CD14-positive monocyte (primary cell): ENCODE measurements at regions of chr5 and their contacts with region 1.

Region 1: DNA sequence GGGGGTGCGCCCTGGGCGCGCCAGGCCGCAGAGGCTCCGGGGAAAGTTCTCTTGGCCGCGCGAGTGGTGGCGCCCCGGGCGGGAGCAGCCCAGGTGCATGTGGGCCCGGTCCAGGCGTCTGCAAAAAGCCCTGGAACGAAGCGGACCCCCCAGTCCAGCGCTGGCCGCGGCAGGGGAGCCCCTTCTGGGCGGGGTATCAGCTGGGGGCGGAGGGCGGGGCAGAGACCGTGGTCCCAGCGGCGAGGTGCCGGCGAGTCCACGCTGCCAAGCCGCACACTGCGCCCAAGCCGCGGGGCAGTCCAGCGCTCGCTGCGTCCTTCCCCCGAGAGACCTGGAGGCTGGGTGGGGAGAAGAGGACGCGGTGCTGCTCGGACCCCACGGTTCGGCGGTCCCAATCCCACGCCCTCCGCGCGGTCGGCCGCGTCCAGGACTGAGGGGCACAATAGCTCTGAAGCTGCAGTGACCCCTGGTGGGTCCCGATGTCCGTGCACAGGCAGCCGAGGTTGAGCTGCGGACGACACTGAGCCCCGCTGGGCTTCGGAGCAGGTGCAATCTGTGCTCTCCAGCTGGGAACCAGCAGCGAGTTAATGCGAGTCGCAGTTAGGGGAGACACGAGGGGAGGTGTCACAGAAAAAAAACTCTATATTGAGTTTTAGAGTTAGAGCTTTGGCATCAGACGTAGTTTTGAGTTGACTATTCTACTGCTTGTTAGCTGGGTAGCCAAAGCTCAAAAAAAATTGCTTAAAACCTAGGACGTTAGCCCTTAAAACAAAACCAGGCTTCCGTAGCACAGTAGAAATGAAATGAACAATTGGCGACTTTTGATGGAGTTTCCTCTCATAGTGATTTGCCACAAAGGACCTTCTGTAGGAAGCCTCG is 1.1 kb upstream of the EPB41L4A start:
- DNase-seq: peak; percentile 6 to 17 (median 13)
- H3K4me3 ChIP-seq: peak overlapping the region; percentile 21 to 75 (median 39)
- H3K4me3 Mint-ChIP-seq: peak overlapping the region; percentile 70 to 79
- H3K27ac ChIP-seq: no peak overlapping the region
- H3K27ac Mint-ChIP-seq: no peak overlapping the region
- H3K4me1 ChIP-seq: peaks cover 20 to 26% of the 10 kb centered on the region in 2 donors
- H3K4me1 Mint-ChIP-seq: peaks cover 18% of the 10 kb centered on the region
- H3K27me3 ChIP-seq: peaks cover 55 to 76% of the 10 kb centered on the region in 2 donors
- H3K27me3 Mint-ChIP-seq: peaks cover 54 to 79% (median 59%) of the 10 kb centered on the region in 3 donors
- CTCF ChIP-seq: peak; percentile 48

Region 2: GRCh38 chr5:112174959-112175594 is 245.1 kb before region 1 on chr5:
- intact Hi-C with region 1: loop called (anchors 10 kb)
- DNase-seq: peak; percentile 19 to 59 (median 54)
- H3K4me3 ChIP-seq: no peak overlapping the region
- H3K4me3 Mint-ChIP-seq: no peak overlapping the region
- H3K27ac ChIP-seq: no peak overlapping the region
- H3K27ac Mint-ChIP-seq: no peak overlapping the region
- H3K4me1 ChIP-seq: no peaks in the 10 kb centered on the region
- H3K4me1 Mint-ChIP-seq: no peaks in the 10 kb centered on the region
- H3K27me3 ChIP-seq: peaks cover 5 to 7% of the 10 kb centered on the region in 2 donors
- H3K27me3 Mint-ChIP-seq: peaks cover 1 to 7% (median 7%) of the 10 kb centered on the region in 3 donors
- CTCF ChIP-seq: peak; percentile 84